ENCODE measurements at regions of chr19 and their contacts with region 1.

Region 1: DNA sequence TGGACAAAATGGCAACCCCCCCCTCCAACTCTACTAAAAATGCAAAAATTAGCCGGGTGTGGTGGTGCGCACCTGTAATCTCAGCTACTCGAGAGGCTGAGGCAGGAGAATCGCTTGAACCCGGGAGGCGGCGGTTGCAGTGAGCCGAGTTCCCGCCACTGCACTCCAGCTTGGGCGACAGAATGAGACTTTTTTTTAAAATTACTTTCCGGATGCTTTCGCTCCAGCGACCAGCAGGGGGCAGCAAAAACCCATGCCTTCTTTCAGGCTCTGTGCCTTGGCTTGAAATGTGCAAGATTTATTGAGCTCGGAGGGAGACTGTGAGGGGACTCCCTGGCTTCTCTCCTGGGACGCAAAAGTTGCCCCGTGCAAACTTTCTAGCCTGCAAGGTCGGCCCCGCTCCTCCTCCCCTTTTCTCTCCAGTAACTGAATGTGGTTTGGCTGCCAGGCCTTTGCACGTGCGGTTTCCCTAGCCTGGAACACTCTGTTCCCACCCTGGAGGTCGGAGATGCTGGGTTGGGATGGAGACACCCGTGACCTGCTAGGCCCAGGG is 61.4 kb upstream of the NFIC start:
- DNase-seq: peak; percentile 83
- CTCF ChIP-seq: peak; percentile 85

Region 2: GRCh38 chr19:3253270-3253669 is 51.7 kb before region 1 on chr19:
- CTCF ChIA-PET with region 1: no interaction called
- POLR2A ChIA-PET with region 1: no interaction called
- DNase-seq: no peak
- CTCF ChIP-seq: no peak

Region 3: DNA sequence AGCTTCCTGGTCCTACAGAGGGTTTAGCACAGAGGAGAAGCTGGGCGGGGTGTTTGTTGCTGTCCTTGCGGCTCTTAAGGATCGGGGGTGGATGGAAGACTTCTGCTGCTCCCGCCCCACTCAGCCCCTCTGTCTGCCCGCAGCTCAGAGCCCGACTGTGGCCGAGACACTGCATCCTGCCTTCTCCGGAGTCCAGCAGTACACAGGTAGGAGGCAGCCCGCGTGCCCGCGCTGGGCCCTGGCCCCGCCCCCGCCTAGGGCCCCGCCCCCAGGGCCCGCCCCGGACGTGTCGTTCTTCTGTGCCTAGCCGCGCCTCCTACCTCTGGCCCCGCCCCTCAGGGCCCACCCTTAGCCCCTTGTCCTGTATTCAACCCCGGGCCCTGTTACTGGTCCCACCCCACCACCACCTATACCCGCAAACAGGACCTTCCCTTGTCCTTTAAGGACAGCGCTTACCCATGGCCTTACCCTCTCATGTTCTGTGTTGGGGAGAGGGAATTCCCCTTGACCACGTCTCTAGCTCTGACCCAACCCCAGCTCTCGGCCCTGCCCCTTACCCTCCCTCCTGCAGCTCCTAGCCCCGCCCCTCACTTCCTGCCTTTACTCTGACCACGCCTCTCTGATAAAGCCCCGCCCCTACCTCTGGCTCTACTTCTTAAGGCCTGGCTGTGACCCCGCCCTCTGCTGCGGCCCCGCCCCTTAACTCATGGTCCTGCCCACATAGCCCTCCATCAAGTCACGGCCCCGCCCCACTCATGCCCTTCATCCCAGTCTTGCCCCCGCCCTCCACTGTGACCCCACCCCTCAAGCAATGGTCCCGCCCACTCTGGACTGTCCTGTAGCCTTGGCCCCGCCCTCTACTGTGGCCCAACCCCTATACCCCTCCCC is 19.9 kb before region 1 on chr19:
- CTCF ChIA-PET with region 1: interaction called, 22 read pairs
- POLR2A ChIA-PET with region 1: no interaction called
- DNase-seq: peak; percentile 72
- CTCF ChIP-seq: no peak

Region 4: DNA sequence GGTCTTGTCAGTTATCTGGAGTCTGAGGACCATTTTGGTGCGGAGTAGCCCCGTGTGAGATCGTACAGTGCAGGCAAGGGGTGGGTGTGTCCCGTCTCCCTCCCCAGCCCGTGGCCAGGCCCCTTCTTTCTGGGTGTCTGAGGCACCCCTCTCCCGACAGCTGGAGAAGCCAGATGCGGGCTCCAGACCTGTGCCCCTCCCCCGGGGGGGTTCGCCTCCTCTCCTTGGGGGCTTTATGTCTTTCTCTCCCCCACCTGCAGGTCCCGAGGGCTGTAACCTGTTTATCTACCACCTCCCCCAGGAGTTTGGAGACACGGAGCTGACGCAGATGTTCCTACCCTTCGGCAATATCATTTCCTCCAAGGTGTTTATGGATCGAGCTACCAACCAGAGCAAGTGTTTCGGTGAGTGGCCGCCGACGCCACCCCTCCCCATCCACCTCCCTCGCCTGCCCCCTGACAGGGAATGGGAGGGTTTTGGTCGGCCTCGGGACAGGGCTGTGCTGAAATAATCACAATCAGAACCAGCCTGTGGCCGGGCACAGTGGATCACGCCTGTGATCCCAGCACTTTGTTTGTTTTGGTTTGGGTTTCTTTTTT is 14.9 kb before region 1 on chr19:
- CTCF ChIA-PET with region 1: interaction called, 22 read pairs
- POLR2A ChIA-PET with region 1: no interaction called
- DNase-seq: no peak
- CTCF ChIP-seq: no peak

Region 5: GRCh38 chr19:3479177-3479833 is 174.4 kb after region 1 on chr19:
- CTCF ChIA-PET with region 1: interaction called, 46 read pairs
- POLR2A ChIA-PET with region 1: no interaction called
- DNase-seq: peak; percentile 69
- CTCF ChIP-seq: no peak

Region 6: GRCh38 chr19:3494051-3494450 is 189.1 kb after region 1 on chr19:
- CTCF ChIA-PET with region 1: interaction called, 11 read pairs
- POLR2A ChIA-PET with region 1: no interaction called
- DNase-seq: no peak
- CTCF ChIP-seq: no peak

Measured in GM10248 (cell line).